Activated CD4-positive, alpha-beta memory T cell treated with anti-CD3 and anti-CD28 coated beads for 36 hours (primary cell): ENCODE measurements at regions of chr1 and their contacts with region 1.

Region 1: DNA sequence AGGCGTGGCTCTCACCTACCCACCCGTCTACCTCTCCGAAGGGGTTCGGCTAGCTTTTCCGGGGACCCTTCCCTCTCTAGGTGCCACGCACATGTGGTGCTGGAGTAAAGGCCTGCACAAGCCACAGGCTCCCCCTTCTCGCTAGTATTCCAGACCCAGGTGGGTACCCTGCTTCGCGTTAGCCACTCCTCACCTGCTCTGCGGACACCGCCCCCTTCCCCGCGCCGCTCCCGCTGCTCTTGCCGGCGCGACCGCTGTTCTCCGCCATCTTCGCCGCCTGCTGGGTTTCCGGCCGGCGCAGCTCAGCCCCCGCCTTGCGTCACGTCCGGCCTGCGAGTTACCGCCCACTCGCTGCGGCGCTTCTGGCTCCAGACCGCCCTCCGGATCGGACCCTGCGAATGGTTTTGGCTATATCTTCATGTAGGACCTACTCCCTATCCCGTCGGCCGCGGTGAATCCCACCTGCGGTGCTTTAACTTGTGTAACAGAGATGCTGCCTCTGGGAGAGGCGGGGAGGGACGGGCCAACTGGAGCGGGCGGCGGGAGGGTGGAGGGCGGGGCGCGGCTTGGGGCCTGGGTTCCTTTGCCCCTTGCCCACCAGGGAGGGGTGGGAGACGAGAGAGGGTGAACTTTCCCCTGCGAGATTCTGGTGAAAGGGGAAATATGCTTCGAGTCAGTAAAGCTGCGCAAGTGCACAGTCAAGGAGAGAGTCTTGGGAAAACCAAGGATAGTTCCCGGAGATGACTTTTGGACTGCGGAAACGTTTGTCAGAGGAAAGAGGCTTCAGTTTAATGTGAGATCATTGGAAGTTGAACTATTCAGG is at the starts of genes NIT1 and PFDN2:
- DNase-seq: peak; percentile 92
- H3K4me3 Mint-ChIP-seq: peak within 1 kb of the TSS; percentile 93
- H3K27ac Mint-ChIP-seq: peak within 1 kb of the TSS; percentile 84
- H3K4me1 Mint-ChIP-seq: peaks cover 66% of the 10 kb centered on the region
- H3K27me3 Mint-ChIP-seq: no peaks in the 10 kb centered on the region
- total RNA-seq, gene NIT1: 65.2 to 66.5 TPM
- total RNA-seq, gene PFDN2: 152 to 155 TPM

Region 2: GRCh38 chr1:161013488-161014230 is 104.3 kb before region 1 on chr1:
- CTCF ChIA-PET with region 1: no interaction called
- POLR2A ChIA-PET with region 1: no interaction called
- intact Hi-C with region 1: loop called (anchors 1 kb)
- DNase-seq: peak; percentile 87
- H3K4me3 Mint-ChIP-seq: peak overlapping the region; percentile 73
- H3K27ac Mint-ChIP-seq: peak overlapping the region; percentile 95
- H3K4me1 Mint-ChIP-seq: peaks cover 52% of the 10 kb centered on the region
- H3K27me3 Mint-ChIP-seq: no peaks in the 10 kb centered on the region

Region 3: DNA sequence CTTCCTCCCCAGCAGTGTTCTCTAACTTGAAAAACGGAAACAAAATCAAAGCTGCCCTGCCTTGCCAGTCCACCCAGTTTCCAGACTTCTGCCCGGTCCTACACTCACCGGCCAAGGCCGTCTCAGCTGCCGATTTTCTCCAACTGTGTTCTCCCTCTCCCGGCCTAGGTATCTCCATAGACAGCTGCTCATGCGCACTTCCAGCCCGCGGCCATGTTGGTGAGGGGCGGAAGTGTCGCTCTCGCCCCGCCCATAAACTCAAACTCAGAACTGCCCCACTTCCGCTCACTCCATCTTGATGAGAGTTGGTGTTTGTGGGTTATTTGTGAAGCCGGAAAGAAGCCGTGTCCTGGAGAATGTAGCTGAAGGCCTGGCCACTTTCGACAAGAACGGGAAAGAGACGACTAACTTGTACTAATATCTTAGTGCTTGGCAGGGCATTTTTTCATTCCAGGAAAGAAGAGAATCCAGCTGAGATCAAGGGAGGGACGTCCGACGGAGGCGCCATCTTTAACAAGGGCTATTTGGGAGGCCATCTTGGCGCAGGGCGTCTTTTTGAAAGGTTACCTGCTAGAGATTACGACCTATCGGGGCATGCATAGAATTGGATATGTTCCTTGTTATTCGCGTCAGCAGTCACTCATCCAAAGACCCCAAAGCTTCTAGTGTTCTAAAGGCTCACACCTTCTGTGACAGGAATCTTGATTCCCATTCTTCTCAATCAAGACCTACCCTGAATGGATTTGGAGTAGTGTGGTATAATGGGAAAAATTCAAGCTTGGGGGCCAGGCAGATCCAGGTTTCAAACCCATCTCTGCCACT is 72.0 kb before region 1 on chr1 and contains the start of gene USF1:
- CTCF ChIA-PET with region 1: interaction called, 3 read pairs
- POLR2A ChIA-PET with region 1: interaction called, 11 read pairs
- intact Hi-C with region 1: loop called (anchors 1 kb)
- DNase-seq: peak; percentile 96
- H3K4me3 Mint-ChIP-seq: peak within 1 kb of the TSS; percentile 90
- H3K27ac Mint-ChIP-seq: peak within 1 kb of the TSS; percentile 96
- H3K4me1 Mint-ChIP-seq: peaks cover 29% of the 10 kb centered on the region
- H3K27me3 Mint-ChIP-seq: no peaks in the 10 kb centered on the region
- total RNA-seq, gene USF1: 43.4 to 43.7 TPM

Region 4: DNA sequence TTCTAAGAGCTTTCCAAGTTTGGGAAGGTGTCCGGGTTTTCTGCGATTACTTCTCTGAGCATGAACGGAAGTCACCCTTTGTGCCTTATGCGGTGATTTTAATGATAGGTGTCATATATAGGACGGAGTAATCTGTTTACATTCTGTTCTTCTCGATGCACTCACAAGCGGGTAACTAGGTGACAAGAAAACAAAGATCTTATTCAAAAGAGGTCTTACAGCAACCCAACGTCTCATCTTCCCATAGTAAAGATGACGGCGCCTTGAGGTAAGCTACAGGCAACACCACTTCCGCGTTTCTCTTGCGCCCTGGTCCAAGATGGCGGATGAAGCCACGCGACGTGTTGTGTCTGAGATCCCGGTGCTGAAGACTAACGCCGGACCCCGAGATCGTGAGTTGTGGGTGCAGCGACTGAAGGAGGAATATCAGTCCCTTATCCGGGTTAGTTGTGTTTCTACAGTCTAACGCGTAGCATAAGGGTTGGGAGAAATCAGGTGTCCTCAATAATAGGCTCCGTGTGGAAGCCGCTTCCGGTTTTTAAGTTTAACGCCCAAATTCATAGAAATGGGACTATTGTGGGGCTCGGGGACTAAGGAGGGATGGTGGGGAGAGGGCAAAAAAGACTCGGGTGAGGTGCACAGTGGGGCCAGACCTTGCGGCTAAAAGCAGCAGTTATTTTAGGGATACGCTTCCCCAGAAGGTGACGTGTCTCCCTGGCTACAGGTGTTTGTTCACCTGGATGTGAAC is 35.9 kb after region 1 on chr1 and contains the start of gene UFC1:
- CTCF ChIA-PET with region 1: no interaction called
- POLR2A ChIA-PET with region 1: interaction called, 3 read pairs
- intact Hi-C with region 1: loop called (anchors 1 kb)
- DNase-seq: peak; percentile 88
- H3K4me3 Mint-ChIP-seq: peak within 1 kb of the TSS; percentile 86
- H3K27ac Mint-ChIP-seq: peak within 1 kb of the TSS; percentile 97
- H3K4me1 Mint-ChIP-seq: peaks cover 20% of the 10 kb centered on the region
- H3K27me3 Mint-ChIP-seq: no peaks in the 10 kb centered on the region
- total RNA-seq, gene UFC1: 87.7 to 91.0 TPM

Region 5: DNA sequence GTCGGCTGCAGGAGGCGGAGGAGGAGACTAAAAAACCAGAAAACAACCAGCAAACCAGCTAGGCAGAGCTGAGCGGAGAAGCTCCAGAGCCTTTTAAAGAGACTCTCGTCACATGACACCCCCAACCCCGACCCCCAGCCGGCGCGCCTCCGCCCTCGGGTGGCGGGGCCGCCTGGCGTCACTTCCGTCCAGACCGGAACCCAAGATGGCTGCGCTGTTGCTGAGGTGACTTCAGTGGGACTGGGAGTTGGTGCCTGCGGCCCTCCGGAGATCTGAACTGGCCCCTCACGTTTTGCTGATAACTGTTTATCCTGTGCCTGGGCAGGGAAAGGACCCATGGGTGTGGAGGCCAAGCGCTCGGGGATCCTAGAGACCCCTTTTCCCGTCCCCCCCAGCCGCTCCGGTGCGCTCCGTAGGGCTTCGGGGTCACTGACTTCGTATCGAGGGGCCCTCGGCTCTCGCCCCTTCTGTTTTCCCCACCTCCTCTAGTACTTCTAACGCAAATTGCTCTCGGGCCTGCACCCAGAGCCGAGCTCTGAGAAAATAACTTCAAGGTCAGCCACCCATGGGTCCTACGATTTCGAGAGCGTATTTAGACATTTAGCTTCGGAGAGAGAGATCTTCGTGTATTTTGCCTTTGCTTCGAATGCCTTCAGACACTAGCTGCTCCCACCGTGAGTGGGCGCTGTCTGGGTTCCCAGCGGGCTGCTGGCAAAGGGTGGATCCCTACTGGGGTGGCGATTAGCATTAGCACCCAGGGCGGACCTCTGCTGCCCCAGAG is 196.4 kb after region 1 on chr1 and contains the start of gene SDHC:
- CTCF ChIA-PET with region 1: no interaction called
- POLR2A ChIA-PET with region 1: no interaction called
- intact Hi-C with region 1: loop called (anchors 5 kb)
- DNase-seq: peak; percentile 92
- H3K4me3 Mint-ChIP-seq: peak within 1 kb of the TSS; percentile 96
- H3K27ac Mint-ChIP-seq: peak within 1 kb of the TSS; percentile 93
- H3K4me1 Mint-ChIP-seq: peaks cover 18% of the 10 kb centered on the region
- H3K27me3 Mint-ChIP-seq: no peaks in the 10 kb centered on the region
- total RNA-seq, gene SDHC: 212 to 215 TPM